Activated CD8-positive, alpha-beta T cell treated with anti-CD3 and anti-CD28 coated beads for 36 hours (primary cell): ENCODE measurements at regions of chr19 and their contacts with region 1.

Region 1: GRCh38 chr19:10858204-10858828 is 10.1 kb downstream of the C19orf38 start:
- DNase-seq: peak; percentile 58
- ATAC-seq: peak; percentile 68
- H3K4me3 Mint-ChIP-seq: no peak overlapping the region
- H3K27ac Mint-ChIP-seq: no peak overlapping the region
- H3K4me1 Mint-ChIP-seq: no peaks in the 10 kb centered on the region
- H3K27me3 Mint-ChIP-seq: no peaks in the 10 kb centered on the region
- CTCF ChIP-seq: peak; percentile 98

Region 2: DNA sequence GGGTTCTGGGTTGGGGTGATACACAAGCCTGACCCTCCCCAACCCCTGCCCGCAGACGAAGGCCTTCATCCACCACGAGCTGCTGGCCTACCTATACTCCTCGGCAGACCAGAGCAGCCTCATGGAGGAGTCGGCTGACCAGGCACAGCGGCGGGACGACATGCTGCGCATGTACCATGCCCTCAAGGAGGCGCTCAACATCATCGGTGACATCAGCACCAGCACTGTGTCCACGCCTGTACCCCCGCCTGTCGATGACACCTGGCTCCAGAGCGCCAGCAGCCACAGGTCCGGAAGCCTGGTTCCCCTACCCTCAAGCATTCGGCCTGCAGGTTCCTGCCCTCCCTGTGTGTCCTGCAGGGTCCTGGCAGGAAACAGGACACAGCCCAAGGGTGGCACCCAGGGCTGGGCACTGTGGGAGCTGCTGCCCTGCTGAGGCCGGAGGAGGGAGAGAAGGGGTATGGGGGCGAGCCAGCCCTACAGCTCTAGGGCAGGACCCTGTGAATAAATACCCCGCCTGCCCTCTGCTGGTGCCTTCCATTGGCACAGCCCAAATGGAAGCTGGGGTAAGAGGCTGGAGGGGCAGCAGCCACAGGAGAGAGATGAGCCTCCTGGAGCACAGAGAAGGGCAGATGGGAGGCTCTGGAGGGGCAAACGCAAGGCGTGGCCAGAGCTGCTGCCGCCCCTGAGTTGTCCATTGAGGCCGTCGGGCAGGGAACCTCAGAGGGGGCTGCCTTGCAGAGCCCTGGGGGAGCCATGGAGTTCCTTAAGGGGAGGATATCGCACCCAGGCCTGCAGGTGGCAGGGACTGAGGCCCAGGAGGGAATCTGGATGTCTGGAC is 29.1 kb before region 1 on chr19:
- CTCF ChIA-PET with region 1: interaction called, 40 read pairs
- POLR2A ChIA-PET with region 1: interaction called, 3 read pairs
- intact Hi-C with region 1: no loop called
- DNase-seq: peak; percentile 38
- ATAC-seq: peak; percentile 55
- H3K4me3 Mint-ChIP-seq: no peak overlapping the region
- H3K27ac Mint-ChIP-seq: no peak overlapping the region
- H3K4me1 Mint-ChIP-seq: no peaks in the 10 kb centered on the region
- H3K27me3 Mint-ChIP-seq: no peaks in the 10 kb centered on the region
- CTCF ChIP-seq: peak; percentile 22

Region 3: DNA sequence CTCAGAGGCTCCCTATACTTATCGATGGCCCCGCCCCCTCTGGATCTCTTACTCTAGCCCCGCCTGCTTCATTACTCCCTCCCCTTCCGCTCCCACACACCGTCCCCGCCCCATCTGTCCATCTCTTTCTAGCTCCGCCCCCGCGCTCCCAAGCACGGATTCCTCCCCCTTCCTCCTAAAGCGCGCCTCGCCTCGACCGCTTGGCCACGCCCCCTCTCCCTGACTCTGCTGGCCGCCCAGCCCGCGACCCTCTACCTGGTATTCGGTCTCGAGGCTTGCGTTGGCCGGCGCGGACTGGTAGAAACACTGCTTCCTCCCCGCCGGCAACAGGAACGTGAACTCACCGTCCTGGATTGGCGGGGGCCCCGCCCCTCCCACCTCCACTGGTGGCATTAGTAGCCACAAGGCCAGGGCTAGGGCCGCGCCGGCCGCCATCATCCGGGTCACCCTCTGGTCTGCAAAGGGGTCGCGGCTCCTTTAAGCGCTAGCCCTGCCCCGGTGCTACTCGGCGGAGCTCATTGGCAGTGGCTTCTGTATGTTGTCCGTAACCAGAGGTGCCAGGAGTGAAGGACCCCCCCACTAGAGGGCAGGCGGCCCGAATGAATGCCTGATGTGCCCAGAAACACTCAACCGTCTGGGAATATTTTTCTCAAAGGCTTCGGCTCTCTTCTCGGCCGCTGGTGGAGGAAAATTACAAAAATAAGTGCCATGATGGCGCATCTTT is 22.4 kb before region 1 on chr19 and contains the start of gene TMED1:
- CTCF ChIA-PET with region 1: interaction called, 40 read pairs
- POLR2A ChIA-PET with region 1: interaction called, 4 read pairs
- intact Hi-C with region 1: no loop called
- DNase-seq: peak; percentile 100
- ATAC-seq: peak; percentile 92
- H3K4me3 Mint-ChIP-seq: peak within 1 kb of the TSS; percentile 98
- H3K27ac Mint-ChIP-seq: peak within 1 kb of the TSS; percentile 99
- H3K4me1 Mint-ChIP-seq: peaks cover 16% of the 10 kb centered on the region
- H3K27me3 Mint-ChIP-seq: no peaks in the 10 kb centered on the region
- CTCF ChIP-seq: no peak
- total RNA-seq, gene TMED1: 12.9 to 15.0 TPM

Region 4: GRCh38 chr19:10842788-10843187 is 15.5 kb before region 1 on chr19:
- CTCF ChIA-PET with region 1: interaction called, 34 read pairs
- POLR2A ChIA-PET with region 1: interaction called, 3 read pairs
- intact Hi-C with region 1: no loop called
- DNase-seq: no peak
- ATAC-seq: no peak
- H3K4me3 Mint-ChIP-seq: no peak overlapping the region
- H3K27ac Mint-ChIP-seq: no peak overlapping the region
- H3K4me1 Mint-ChIP-seq: no peaks in the 10 kb centered on the region
- H3K27me3 Mint-ChIP-seq: no peaks in the 10 kb centered on the region
- CTCF ChIP-seq: no peak

Region 5: GRCh38 chr19:10870955-10871603 is 12.8 kb after region 1 on chr19 and contains the start of gene CARM1:
- CTCF ChIA-PET with region 1: interaction called, 137 read pairs
- POLR2A ChIA-PET with region 1: interaction called, 4 read pairs
- intact Hi-C with region 1: no loop called
- DNase-seq: peak; percentile 100
- ATAC-seq: peak; percentile 93
- H3K4me3 Mint-ChIP-seq: peak within 1 kb of the TSS; percentile 76
- H3K27ac Mint-ChIP-seq: peak within 1 kb of the TSS; percentile 87
- H3K4me1 Mint-ChIP-seq: peaks cover 28% of the 10 kb centered on the region
- H3K27me3 Mint-ChIP-seq: no peaks in the 10 kb centered on the region
- CTCF ChIP-seq: no peak
- total RNA-seq, gene CARM1: 95.1 to 95.4 TPM